A673 (cell line): ENCODE measurements at regions of chr17 and their contacts with region 1.

Region 1: DNA sequence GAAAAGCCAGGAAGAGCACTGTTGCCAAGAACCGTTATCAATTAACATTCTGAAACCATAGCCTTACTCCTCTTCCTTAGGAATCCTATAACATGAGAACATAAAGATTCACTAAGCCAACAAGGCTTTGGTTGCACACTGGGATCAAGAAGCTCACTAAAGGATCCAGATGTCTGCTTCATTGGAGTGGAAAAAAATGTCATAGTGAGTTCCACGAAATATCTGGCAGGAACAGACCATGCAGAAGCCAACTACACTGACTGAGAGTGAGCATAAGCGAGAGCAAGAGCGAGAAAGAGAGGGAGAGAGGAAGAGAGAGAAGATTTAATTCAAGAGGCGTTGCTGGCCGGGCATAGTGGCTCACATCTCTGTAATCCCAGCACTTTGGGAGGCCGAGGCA is 13.4 kb upstream of the MEIOC start:
- DNase-seq: no peak
- H3K4me3 ChIP-seq: no peak overlapping the region
- H3K27ac ChIP-seq: no peak overlapping the region
- H3K4me1 ChIP-seq: no peaks in the 10 kb centered on the region
- H3K27me3 ChIP-seq: no peaks in the 10 kb centered on the region
- CTCF ChIP-seq: no peak

Region 2: GRCh38 chr17:43768382-43768781 is 874.5 kb before region 1 on chr17:
- CTCF ChIA-PET with region 1: no interaction called
- POLR2A ChIA-PET with region 1: no interaction called
- intact Hi-C with region 1: no loop called
- DNase-seq: no peak
- H3K4me3 ChIP-seq: no peak overlapping the region
- H3K27ac ChIP-seq: no peak overlapping the region
- H3K4me1 ChIP-seq: no peaks in the 10 kb centered on the region
- H3K27me3 ChIP-seq: no peaks in the 10 kb centered on the region
- CTCF ChIP-seq: no peak

Region 3: GRCh38 chr17:44159519-44160210 is 483.2 kb before region 1 on chr17:
- CTCF ChIA-PET with region 1: no interaction called
- POLR2A ChIA-PET with region 1: no interaction called
- intact Hi-C with region 1: no loop called
- DNase-seq: no peak
- H3K4me3 ChIP-seq: no peak overlapping the region
- H3K27ac ChIP-seq: no peak overlapping the region
- H3K4me1 ChIP-seq: no peaks in the 10 kb centered on the region
- H3K27me3 ChIP-seq: no peaks in the 10 kb centered on the region
- CTCF ChIP-seq: no peak

Region 4: GRCh38 chr17:44487170-44487569 is 155.7 kb before region 1 on chr17:
- CTCF ChIA-PET with region 1: no interaction called
- POLR2A ChIA-PET with region 1: no interaction called
- intact Hi-C with region 1: no loop called
- DNase-seq: no peak
- H3K4me3 ChIP-seq: no peak overlapping the region
- H3K27ac ChIP-seq: no peak overlapping the region
- H3K4me1 ChIP-seq: no peaks in the 10 kb centered on the region
- H3K27me3 ChIP-seq: no peaks in the 10 kb centered on the region
- CTCF ChIP-seq: no peak

Region 5: DNA sequence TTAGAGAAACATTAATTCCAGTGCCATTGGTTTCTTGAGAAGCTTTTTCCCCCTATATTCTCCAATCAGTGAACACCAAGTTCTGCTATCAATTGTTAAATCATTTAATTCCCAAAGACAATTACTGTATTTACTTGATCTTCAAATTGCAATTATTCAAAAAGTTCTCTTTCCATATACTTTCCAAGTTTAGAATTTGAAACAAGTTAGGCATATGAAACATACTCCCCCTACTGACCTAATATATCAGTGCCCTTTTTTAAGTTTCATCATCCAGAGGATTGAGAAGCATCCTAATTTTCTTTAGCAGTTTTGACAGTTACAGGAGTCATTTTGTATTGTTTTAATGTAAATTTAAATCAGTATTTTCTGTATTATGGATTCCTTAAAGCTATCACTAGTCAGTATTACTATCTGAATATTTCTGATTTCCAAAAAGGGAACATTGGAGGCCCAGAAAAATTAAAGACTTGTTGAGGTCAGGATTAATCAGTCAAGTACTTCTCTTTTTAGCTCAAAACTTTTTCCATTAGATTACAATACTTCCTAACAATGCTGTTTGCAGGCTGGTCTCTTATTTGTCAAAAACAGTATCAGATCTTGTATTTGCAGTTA is 29.8 kb after region 1 on chr17:
- CTCF ChIA-PET with region 1: no interaction called
- POLR2A ChIA-PET with region 1: interaction called, 10 read pairs
- intact Hi-C with region 1: no loop called
- DNase-seq: peak; percentile 9
- H3K4me3 ChIP-seq: no peak overlapping the region
- H3K27ac ChIP-seq: no peak overlapping the region
- H3K4me1 ChIP-seq: no peaks in the 10 kb centered on the region
- H3K27me3 ChIP-seq: no peaks in the 10 kb centered on the region
- CTCF ChIP-seq: peak; percentile 56